GM10248 (cell line): ENCODE measurements at regions of chr2 and their contacts with region 1.

Region 1: GRCh38 chr2:122660786-122661634 is 905.6 kb downstream of the TSN start:
- DNase-seq: no peak
- CTCF ChIP-seq: no peak

Region 2: GRCh38 chr2:122681626-122682025 is 20.6 kb after region 1 on chr2:
- CTCF ChIA-PET with region 1: interaction called, 12 read pairs
- POLR2A ChIA-PET with region 1: no interaction called
- DNase-seq: peak; percentile 23
- CTCF ChIP-seq: no peak